ENCODE measurements at regions of chr1 and their contacts with region 1.

Region 1: DNA sequence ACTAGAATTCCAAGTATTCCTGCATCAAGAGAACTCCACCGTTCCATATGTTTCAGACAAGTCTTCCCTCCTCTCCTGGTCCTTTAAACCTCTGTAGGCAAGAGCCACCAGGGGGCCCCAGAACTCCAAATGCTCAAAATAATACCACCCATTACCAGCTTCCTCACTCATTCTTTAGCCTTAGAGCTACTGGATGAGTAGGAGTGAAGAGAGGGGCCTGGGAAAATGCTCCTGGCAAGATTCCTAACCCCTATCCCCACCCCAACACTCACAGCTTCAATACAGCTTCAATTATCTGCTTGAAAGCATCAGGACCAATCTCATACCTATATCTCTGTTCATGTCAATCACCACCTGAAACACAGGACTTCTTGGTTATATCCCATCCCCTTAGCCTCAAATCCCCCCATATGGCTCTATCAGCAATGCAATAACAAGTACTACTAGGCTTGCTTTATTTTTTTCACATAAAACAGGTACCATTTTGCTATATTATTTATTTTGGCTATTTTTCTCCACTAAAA is 9.7 kb downstream of the TOR1AIP2 start:
- DNase-seq: peak; percentile 50
- ATAC-seq: peak; percentile 93
- H3K4me3 ChIP-seq: no peak overlapping the region
- H3K27ac ChIP-seq: no peak overlapping the region
- H3K4me1 ChIP-seq: no peaks in the 10 kb centered on the region; the same call in 1 of the 2 replicates
- H3K27me3 ChIP-seq: no peaks in the 10 kb centered on the region
- CTCF ChIP-seq: peak; percentile 74
- POLR2A ChIP-seq: no peak
- RAD21 ChIP-seq: peak; percentile 61

Region 2: DNA sequence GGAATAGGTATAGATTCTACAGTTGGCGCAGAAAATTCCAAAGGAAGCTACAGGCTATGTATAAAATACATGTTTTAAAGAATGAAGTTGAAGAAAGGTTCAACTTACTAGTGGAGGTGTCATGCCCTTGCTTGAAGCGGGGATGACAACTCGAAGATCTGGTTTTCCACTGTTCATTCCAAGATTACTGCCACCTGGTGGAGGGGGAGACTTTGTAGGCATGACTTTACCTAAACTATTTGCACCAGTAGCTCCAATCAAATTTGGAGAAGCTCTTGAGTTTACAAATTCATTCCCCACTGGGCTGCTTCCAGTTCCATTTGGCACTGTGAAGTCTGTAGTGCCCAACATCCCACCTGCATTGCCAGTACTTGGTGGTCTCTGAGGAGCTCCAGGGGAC is 420.4 kb before region 1 on chr1:
- CTCF ChIA-PET with region 1: no interaction called
- POLR2A ChIA-PET with region 1: no interaction called
- dilution Hi-C with region 1: no loop called
- in situ Hi-C with region 1: no loop called
- intact Hi-C with region 1: no loop called
- DNase-seq: peak; percentile 2
- ATAC-seq: no peak
- H3K4me3 ChIP-seq: no peak overlapping the region
- H3K27ac ChIP-seq: no peak overlapping the region
- H3K4me1 ChIP-seq: no peaks in the 10 kb centered on the region
- H3K27me3 ChIP-seq: no peaks in the 10 kb centered on the region
- CTCF ChIP-seq: 0 out of 2 replicates have a peak, but pooled peaks have one; percentile 5
- POLR2A ChIP-seq: no peak
- RAD21 ChIP-seq: no peak

Region 3: GRCh38 chr1:179706339-179706941 is 161.4 kb before region 1 on chr1:
- CTCF ChIA-PET with region 1: no interaction called
- POLR2A ChIA-PET with region 1: no interaction called
- dilution Hi-C with region 1: no loop called
- in situ Hi-C with region 1: no loop called
- intact Hi-C with region 1: loop called (anchors 1 kb)
- DNase-seq: peak; percentile 67
- ATAC-seq: peak; percentile 62
- H3K4me3 ChIP-seq: no peak overlapping the region
- H3K27ac ChIP-seq: no peak overlapping the region
- H3K4me1 ChIP-seq: no peaks in the 10 kb centered on the region
- H3K27me3 ChIP-seq: peaks cover 20% of the 10 kb centered on the region
- CTCF ChIP-seq: peak; percentile 91
- POLR2A ChIP-seq: no peak
- RAD21 ChIP-seq: peak; percentile 92

Region 4: DNA sequence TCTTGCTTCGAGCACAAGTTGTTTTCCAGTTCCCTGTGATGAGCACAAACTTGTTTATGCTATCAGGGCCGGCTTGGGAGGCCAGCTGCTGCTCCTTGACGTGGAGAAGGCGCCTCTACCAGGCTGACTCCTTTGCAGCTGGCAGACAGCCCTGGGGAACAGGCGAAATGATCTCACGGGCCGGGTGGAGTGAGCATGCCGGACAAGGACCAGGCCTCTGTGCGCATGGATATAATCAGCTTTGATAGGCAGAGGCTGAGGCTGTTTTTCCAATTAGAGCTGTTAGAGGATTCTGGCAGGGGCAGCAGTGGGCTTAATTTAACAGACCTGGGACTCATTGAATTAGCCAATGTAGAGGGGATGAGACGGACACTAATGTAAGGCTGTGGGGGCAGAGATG is 85.9 kb before region 1 on chr1:
- CTCF ChIA-PET with region 1: no interaction called
- POLR2A ChIA-PET with region 1: no interaction called
- dilution Hi-C with region 1: no loop called
- in situ Hi-C with region 1: no loop called
- intact Hi-C with region 1: no loop called
- DNase-seq: peak; percentile 50
- ATAC-seq: peak; percentile 85
- H3K4me3 ChIP-seq: no peak overlapping the region
- H3K27ac ChIP-seq: no peak overlapping the region
- H3K4me1 ChIP-seq: peaks cover 4% of the 10 kb centered on the region
- H3K27me3 ChIP-seq: peaks cover 24% of the 10 kb centered on the region
- CTCF ChIP-seq: no peak
- POLR2A ChIP-seq: no peak
- RAD21 ChIP-seq: no peak

Region 5: DNA sequence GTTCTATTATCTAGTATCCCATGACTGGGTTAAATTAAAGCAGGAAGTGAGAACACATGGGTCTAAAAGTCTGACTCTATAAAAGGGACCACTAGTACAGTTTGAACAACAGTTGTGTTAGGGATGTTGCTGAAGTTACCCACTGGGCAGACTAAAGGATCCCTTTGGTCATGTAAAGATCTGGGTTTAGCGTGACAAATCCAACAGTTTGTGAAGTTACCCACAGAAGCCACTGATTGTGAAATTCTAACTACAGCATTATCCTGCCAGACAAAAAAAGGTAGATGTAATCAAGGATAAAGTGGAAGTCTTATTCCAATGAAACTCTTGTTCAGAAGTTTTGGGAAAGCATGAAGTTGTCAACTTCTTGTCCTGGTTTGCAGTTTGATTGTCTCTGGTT is 292.5 kb after region 1 on chr1:
- CTCF ChIA-PET with region 1: interaction called, 3 read pairs
- POLR2A ChIA-PET with region 1: no interaction called
- dilution Hi-C with region 1: no loop called
- in situ Hi-C with region 1: no loop called
- intact Hi-C with region 1: loop called (anchors 5 kb)
- DNase-seq: no peak
- ATAC-seq: no peak
- H3K4me3 ChIP-seq: no peak overlapping the region
- H3K27ac ChIP-seq: no peak overlapping the region
- H3K4me1 ChIP-seq: peaks cover 21% of the 10 kb centered on the region
- H3K27me3 ChIP-seq: no peaks in the 10 kb centered on the region
- CTCF ChIP-seq: no peak
- POLR2A ChIP-seq: no peak
- RAD21 ChIP-seq: no peak

Region 6: GRCh38 chr1:180178511-180179161 is 310.8 kb after region 1 on chr1:
- CTCF ChIA-PET with region 1: interaction called, 3 read pairs
- POLR2A ChIA-PET with region 1: no interaction called
- dilution Hi-C with region 1: no loop called
- in situ Hi-C with region 1: loop called (anchors 10 kb)
- intact Hi-C with region 1: loop called (anchors 1 kb)
- DNase-seq: peak; percentile 43
- ATAC-seq: peak; percentile 24; the same call in 1 of the 2 replicates
- H3K4me3 ChIP-seq: no peak overlapping the region
- H3K27ac ChIP-seq: no peak overlapping the region
- H3K4me1 ChIP-seq: peaks cover 2% of the 10 kb centered on the region; the same call in 1 of the 2 replicates
- H3K27me3 ChIP-seq: no peaks in the 10 kb centered on the region
- CTCF ChIP-seq: peak; percentile 82
- POLR2A ChIP-seq: no peak
- RAD21 ChIP-seq: peak; percentile 93

Region 7: DNA sequence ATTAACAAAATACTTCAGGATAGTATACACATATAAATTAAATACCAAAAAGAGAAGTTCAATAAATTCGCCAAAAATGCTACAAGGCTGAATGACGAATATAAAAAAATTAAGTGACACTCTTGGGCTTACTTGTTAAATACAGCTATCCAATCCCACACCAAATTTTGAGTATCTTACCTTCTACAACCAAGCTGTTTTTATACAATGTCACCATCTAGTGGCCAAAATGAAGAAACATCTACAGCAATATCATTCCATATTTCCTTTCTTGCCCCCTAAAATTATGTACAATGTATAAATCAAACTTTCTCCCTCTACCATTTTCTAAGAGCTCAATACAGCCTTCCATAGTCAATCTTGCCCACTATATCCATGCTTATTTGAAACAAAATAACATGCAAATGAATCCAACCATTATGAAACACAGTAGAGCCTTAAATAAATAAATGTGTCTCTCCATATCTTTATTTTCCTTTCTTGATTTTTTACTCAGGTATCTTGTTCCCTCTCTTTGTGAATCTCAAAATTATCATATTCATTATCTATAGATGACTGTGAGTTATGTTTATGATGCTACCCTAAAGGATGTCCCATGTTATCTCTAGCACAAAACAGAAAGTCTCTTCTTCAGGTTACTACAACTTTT is 548.2 kb after region 1 on chr1:
- CTCF ChIA-PET with region 1: no interaction called
- POLR2A ChIA-PET with region 1: no interaction called
- dilution Hi-C with region 1: no loop called
- in situ Hi-C with region 1: loop called (anchors 25 kb)
- intact Hi-C with region 1: no loop called
- DNase-seq: peak; percentile 55
- ATAC-seq: no peak
- H3K4me3 ChIP-seq: no peak overlapping the region
- H3K27ac ChIP-seq: no peak overlapping the region
- H3K4me1 ChIP-seq: no peaks in the 10 kb centered on the region
- H3K27me3 ChIP-seq: no peaks in the 10 kb centered on the region
- CTCF ChIP-seq: peak; percentile 65
- POLR2A ChIP-seq: no peak
- RAD21 ChIP-seq: peak; percentile 77